Heart left ventricle (tissue), 16 donors: ENCODE measurements at regions of chrX and their contacts with region 1.

Region 1: DNA sequence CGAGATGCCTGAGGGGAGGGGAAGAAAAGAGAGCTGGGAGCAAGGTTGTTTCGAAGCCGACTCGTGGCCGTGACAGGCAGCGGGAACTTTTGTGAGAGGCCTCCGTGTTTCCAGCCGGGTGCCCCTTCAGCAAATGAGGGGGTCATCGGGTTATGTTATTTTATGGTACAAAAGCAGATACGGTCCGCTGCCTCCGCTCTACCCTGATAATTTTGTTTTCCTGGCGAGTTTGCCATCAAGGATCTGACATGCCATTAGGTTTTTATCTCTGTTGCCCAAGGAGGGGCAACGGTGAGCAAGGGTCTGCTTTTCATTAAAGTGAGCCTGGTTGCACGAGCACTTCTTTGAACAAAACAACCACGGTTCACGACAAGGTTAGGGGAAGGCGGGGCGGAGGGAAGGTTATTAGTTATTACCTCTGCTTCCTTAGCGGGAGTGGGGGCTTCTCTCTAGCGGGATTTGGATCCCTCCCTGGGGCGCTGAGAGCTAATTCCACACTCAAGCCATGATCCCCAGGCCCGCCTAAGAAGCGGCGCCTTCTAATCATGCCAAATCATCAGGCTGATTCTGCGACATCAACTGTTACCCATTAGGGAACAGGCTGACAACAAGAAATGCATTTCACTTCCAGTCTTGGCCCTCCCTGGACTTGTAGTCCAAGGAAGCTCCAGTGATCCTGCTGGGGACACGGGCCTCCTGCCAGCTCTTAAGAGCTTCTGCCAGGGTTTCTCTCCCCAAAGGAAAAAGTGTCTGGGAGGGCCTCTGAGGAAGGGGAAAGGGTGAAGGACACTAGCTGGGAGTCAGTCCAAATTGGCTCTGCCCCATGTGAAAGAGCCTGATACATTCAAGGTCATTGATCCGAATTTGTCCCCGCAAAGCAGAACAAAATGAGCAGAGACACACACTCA is 617.7 kb downstream of the MID1IP1 start:
- DNase-seq: peak; percentile 37 to 68 (median 60)
- ATAC-seq: peak; percentile 62 to 77 (median 68)
- H3K4me3 ChIP-seq: no peak overlapping the region
- H3K27ac ChIP-seq: peak overlapping the region in 9 of 12 donors; percentile 3 to 49 (median 26)
- H3K4me1 ChIP-seq: peaks cover 0 to 14% (median 0%) of the 10 kb centered on the region in 12 donors
- H3K27me3 ChIP-seq: peaks cover 0 to 6% (median 0%) of the 10 kb centered on the region in 9 donors
- CTCF ChIP-seq: no peak
- POLR2A ChIP-seq: no peak

Region 2: DNA sequence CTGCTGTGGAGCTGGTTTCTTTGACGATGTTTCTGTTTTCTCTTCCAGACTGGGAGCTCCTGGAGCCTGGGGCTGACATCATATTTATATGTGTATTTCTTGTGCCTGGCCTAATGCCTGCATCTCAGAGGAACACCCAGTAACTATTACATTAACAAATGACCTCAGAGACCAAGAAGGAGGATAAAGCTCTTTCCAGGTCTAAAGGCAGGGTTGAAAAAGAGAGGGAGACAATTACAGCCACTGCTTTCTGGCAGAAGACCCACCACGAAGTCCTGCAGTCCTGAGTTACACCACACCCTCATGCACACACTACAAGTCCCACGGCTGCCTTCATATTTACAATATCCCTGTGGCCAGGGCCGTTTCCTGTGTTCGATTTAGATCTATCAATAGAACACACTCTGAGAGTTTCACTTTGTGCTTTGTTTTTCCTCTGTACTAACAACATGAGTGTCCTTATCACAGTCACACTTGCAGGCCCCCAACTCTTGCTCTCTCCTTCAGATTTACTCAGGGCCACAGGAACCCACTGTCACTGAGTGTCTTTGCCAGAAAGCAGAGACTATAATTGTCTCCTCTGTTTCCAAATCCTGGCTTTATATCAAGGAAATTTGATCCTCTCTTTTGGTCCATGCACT is 82.2 kb before region 1 on chrX:
- intact Hi-C with region 1: loop called in 1 of 10 experiments (anchors 5 kb)
- DNase-seq: peak in 3 of 5 donors; percentile 20 to 28 (median 27)
- ATAC-seq: peak; percentile 72 to 92 (median 86)
- H3K4me3 ChIP-seq: no peak overlapping the region
- H3K27ac ChIP-seq: peak overlapping the region; percentile 9 to 71 (median 52)
- H3K4me1 ChIP-seq: peaks cover 0 to 27% (median 5%) of the 10 kb centered on the region in 12 donors
- H3K27me3 ChIP-seq: peaks cover 0 to 15% (median 0%) of the 10 kb centered on the region in 9 donors
- CTCF ChIP-seq: no peak
- POLR2A ChIP-seq: no peak

Region 3: GRCh38 chrX:39398963-39399261 is 20.1 kb before region 1 on chrX:
- intact Hi-C with region 1: no loop called
- DNase-seq: peak in 1 of 5 donors; percentile 9
- ATAC-seq: peak in 1 of 4 donors; percentile 11
- H3K4me3 ChIP-seq: peak overlapping the region in 2 of 12 donors; percentile 3 to 24
- H3K27ac ChIP-seq: no peak overlapping the region
- H3K4me1 ChIP-seq: no peaks in the 10 kb centered on the region
- H3K27me3 ChIP-seq: peaks cover 0 to 8% (median 0%) of the 10 kb centered on the region in 9 donors
- CTCF ChIP-seq: no peak
- POLR2A ChIP-seq: no peak